Activated naive CD4-positive, alpha-beta T cell treated with anti-CD3 and anti-CD28 coated beads, Interleukin-2, amount 10 ng/mL, durations not matched to agents 7 days and 5 days (primary cell): ENCODE measurements at regions of chr11 and their contacts with region 1.

Region 1: DNA sequence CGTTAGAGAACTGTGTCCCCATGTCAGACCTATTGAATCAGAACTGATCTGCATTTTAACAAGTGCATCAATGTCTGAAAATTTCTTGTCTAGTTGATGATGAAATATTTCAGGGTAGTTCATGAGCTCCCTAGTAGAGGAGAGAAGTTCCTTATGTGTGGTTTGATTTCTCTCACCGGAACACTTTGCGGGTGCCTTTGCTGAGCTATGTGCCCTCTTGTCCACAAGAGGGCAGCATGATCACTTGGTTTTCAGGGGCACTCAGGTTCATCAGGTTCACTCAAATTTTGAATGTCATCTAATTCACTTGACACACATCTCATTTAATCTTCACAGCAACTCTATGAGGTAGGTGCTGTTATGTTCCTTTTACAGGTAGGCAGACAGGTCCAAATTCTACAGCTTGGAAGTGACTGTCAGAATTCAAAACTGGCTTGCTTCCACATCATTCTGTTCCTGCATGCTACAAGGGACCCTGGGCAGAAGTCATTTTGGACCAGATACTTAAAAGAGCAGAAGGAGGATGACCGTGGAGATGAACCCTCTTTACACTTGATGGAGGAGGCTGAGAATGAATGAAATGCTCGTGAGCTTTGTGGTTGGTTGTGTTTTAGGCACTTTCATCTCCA is 55.6 kb downstream of the P4HA3 start:
- DNase-seq: peak; percentile 66
- H3K4me3 Mint-ChIP-seq: no peak overlapping the region
- H3K27ac Mint-ChIP-seq: no peak overlapping the region
- H3K4me1 Mint-ChIP-seq: no peaks in the 10 kb centered on the region
- H3K27me3 Mint-ChIP-seq: no peaks in the 10 kb centered on the region

Region 2: GRCh38 chr11:73538381-73538872 is 717.4 kb before region 1 on chr11:
- CTCF ChIA-PET with region 1: no interaction called
- DNase-seq: peak; percentile 47
- H3K4me3 Mint-ChIP-seq: no peak overlapping the region
- H3K27ac Mint-ChIP-seq: peak overlapping the region; percentile 89
- H3K4me1 Mint-ChIP-seq: peaks cover 27% of the 10 kb centered on the region
- H3K27me3 Mint-ChIP-seq: no peaks in the 10 kb centered on the region

Region 3: DNA sequence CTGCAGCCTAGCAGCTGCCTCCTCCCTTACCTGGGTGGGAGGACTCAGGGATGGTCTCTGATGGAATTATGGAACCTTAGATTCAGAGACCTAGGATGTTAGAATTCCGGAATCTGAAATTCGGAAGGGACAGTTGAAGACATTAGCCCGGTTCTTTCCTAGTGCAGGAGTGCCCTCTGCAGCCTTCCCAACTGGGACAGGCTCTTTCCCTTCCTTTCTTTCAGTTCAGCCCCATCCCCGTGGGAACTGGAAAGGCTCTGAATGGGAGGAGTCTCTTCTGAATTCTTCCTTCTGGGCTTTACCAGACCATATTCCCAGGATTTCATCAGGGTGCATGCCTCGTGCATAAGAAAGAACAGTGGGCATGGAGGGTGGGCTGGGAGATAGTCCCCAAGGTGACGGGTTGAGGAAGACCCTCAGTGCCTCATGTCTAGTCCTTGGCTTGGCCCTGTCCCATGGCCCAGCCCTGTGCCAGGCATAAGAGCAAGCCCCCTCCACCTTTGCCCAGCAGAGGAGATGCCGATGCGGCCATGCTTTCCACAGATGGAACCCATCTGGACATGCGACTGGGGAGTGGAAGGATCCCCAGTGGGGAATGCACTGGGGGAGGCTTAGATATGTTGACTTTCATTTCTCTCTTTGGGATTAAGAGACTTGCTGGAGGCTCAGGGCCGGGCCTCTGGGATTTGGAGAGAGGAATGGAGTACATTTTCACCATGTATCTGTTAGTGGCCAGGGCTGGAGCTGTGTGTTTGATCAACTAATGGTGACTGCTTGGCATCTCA is 290.6 kb before region 1 on chr11:
- CTCF ChIA-PET with region 1: interaction called, 11 read pairs
- DNase-seq: no peak
- H3K4me3 Mint-ChIP-seq: no peak overlapping the region
- H3K27ac Mint-ChIP-seq: no peak overlapping the region
- H3K4me1 Mint-ChIP-seq: peaks cover 32% of the 10 kb centered on the region
- H3K27me3 Mint-ChIP-seq: peaks cover 23% of the 10 kb centered on the region

Region 4: DNA sequence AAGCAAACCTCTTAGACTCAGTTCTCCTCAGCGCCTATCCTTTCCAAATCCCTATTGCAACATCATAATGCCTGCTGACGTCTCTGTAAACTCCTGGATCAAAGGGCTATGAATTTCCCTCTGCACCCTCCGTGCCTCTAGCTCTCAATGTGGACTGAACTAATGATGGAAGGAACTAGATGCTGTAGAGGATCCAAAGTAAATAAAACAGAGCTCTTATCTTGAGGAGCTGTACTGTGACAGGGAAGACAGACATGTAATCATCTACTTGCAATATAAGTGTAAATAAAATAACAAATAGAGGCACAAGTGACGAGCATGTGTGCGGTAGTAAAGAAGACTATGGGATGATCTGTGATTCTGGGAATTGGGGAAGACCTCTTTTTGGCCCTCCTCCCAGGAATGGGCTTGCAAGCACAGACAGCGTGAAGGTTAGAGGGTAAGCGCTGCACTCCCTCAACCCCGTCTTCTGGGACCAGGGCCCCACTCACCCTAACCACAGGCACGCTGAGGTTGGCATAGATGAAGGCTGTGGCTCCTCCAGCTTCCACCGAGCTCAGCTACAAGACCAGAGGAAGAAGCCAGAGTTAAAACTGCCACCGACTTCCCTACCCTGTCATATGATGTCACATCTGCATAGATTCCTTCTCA is 13.4 kb after region 1 on chr11:
- CTCF ChIA-PET with region 1: interaction called, 12 read pairs
- DNase-seq: no peak
- H3K4me3 Mint-ChIP-seq: no peak overlapping the region
- H3K27ac Mint-ChIP-seq: no peak overlapping the region
- H3K4me1 Mint-ChIP-seq: peaks cover 12% of the 10 kb centered on the region
- H3K27me3 Mint-ChIP-seq: peaks cover 12% of the 10 kb centered on the region

Region 5: DNA sequence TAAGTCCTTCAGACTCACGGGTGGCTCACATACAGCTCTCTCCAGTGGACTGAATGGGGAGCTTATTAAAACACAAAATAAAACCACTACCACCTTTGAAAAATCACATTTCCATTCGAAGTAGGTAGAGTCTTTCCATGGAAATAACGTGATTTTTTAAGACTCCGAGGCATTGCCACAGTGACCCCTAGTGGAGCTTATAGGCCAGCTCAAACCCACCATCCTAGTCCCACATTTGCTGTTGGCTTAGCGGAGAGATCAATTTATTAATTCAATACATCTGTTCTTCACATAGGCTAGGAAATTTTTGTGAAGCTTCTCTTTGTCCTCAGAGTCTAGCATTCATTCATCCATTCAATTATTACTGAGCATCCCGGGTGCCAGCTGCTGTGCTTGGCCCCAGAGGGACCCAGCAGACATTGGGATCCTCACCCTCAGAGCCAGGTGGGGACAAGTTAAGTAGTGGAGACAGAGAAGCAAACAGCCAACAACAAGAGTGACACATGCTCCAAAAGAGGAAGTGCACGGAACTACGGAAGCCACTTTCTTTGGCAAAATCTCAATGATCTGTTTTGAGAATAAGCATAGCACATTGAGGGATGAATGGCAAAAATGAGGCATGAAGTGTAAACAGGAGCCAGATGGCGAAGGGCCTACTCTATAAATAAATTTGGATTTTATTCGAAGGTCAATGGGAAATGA is 65.8 kb after region 1 on chr11:
- CTCF ChIA-PET with region 1: interaction called, 50 read pairs
- DNase-seq: peak; percentile 48
- H3K4me3 Mint-ChIP-seq: no peak overlapping the region
- H3K27ac Mint-ChIP-seq: no peak overlapping the region
- H3K4me1 Mint-ChIP-seq: no peaks in the 10 kb centered on the region
- H3K27me3 Mint-ChIP-seq: peaks cover 25% of the 10 kb centered on the region

Region 6: DNA sequence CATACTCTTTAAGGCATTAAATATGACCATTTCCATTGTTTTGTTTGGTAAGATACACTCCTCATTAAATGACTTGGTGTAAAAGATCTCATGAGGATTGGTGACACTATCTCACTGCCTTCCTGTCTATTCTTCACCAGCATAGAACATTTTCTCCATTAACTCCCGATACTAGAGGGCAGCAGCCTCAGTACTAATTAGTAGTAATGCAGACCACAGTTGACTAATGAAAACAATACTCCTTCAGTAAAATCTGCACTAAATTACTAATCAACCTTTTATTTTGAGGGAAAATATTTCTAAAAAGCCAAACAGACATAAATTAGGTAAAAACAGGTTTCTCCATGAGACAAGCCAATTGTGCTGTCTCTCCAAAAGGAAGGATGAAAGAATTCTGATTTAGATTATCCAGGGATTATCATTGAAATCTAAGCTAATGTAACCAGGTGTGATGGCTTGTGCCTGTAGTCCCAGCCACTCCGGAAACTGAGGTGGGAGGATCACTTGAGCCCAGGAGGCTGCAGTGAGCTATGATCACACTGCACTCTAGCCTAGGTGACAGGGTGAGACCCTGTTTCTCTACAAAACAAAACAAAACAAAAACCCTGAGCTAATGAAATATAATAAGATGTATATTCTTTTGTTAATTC is 132.9 kb after region 1 on chr11:
- CTCF ChIA-PET with region 1: interaction called, 10 read pairs
- DNase-seq: peak; percentile 75
- H3K4me3 Mint-ChIP-seq: no peak overlapping the region
- H3K27ac Mint-ChIP-seq: no peak overlapping the region
- H3K4me1 Mint-ChIP-seq: peaks cover 16% of the 10 kb centered on the region
- H3K27me3 Mint-ChIP-seq: no peaks in the 10 kb centered on the region

Region 7: DNA sequence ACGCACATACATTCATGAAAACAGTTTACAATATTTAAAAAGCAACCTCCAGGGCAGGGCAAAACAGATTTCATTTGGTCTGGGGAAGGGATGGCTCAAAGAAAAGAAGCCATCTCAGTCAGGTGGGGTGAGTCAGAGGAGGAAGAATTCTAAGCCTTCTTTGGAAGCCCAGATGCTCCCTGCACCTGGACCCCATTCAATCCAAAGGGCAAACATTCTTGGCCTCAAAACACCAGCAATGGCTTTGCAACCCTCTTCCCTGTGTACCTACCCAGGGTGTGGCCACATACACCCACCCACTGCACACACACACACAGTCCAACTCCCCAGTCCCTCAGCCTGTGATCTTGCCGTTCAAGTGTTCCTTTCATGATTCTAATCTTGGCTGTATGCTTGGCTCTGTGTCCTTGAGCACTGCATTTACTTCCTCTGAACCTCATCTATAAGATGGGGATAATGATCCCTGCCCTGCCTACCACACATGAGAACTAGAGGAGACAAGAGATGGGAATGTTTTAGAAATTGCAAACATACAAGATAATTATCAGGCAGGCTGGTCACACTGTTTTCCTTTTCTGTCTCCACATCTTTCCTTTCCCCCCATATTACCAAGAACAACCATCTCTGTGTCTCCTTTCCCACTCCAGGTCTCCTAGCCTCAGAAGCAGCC is 209.6 kb after region 1 on chr11:
- CTCF ChIA-PET with region 1: no interaction called
- DNase-seq: no peak
- H3K4me3 Mint-ChIP-seq: no peak overlapping the region
- H3K27ac Mint-ChIP-seq: no peak overlapping the region
- H3K4me1 Mint-ChIP-seq: peaks cover 5% of the 10 kb centered on the region
- H3K27me3 Mint-ChIP-seq: peaks cover 69% of the 10 kb centered on the region

Region 8: DNA sequence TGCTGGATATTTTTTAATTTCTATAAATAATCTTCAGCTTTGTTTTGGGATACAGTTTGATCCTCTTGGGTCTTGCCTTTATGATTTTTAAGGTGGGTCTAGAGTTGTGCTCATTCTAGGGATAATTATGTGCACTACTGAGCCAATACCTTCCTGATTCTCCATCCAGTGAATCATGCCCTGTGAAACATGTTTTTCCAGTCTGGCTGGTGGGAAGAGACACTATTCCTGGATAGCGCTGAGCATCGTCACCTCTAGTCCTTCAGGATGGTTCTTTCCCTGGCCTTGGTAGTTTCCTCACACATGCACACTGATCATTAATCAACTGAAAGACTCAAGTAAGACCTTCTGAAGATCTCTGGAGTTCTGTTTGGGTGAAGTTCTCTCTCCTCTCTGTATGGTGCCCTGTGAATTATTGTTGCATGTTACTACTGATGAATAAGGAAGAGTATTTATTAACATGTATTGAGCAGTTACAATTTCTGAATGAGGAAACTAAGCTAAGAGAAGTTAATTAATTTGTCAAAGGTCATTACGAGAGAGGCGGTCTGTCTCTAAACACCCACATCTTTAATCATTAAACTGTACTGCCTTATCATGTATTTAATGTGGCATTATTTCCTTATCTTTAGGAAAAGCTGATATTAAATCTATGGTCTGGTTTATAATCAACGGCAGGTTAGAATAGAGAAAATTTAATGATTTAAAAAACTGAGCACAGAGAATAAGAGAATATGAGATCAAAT is 276.8 kb after region 1 on chr11:
- CTCF ChIA-PET with region 1: no interaction called
- DNase-seq: no peak
- H3K4me3 Mint-ChIP-seq: no peak overlapping the region
- H3K27ac Mint-ChIP-seq: no peak overlapping the region
- H3K4me1 Mint-ChIP-seq: no peaks in the 10 kb centered on the region
- H3K27me3 Mint-ChIP-seq: no peaks in the 10 kb centered on the region